CD14-positive monocyte (primary cell): ENCODE measurements at regions of chr4 and their contacts with region 1.

Region 1: DNA sequence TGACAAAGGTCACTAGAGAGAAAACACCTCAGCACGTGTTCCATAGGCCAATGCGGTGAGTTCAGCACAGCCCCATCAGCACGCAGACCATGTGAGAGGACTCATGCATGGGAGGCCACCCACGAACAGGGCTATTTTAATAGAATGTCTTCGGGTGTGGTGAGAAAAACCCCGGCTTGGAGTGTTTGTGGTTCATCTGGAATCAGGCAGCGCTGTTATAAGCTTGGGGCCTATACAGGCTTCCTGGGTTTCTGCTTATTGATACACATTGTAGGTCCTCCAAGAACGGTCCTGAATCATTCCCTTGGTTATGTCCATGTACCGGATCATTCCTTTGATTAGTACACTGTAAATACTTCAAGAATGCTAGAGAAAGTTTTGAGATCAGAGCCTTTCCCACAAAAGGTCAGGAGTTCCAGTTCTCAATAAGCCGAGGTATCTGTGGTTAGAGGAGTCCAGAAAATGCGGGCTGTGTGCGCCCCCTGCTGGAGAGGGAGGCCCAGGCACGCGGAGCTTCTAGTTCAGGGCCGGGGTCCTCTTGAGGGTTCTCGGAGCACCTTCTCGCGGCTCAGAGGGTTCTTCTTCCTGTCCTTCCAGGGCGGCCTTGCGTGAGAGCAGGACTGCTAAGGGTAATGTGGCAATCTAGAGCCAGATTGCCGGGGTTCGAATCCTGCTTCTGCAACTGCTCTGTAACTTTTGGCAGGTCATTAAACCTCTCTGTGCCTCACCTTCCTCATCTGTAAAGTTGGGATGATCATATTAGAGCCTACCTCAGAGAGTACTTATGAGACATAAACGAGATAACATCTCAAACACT is 51.8 kb downstream of the TLR10 start:
- DNase-seq: peak; percentile 62 to 75 (median 67)
- H3K4me3 ChIP-seq: no peak overlapping the region
- H3K4me3 Mint-ChIP-seq: no peak overlapping the region
- H3K27ac ChIP-seq: no peak overlapping the region
- H3K27ac Mint-ChIP-seq: no peak overlapping the region
- H3K4me1 ChIP-seq: peaks cover 14 to 29% of the 10 kb centered on the region in 2 donors
- H3K4me1 Mint-ChIP-seq: peaks cover 20% of the 10 kb centered on the region
- H3K27me3 ChIP-seq: no peaks in the 10 kb centered on the region
- H3K27me3 Mint-ChIP-seq: peaks cover 0 to 4% (median 2%) of the 10 kb centered on the region in 3 donors
- CTCF ChIP-seq: peak; percentile 99

Region 2: GRCh38 chr4:38055566-38055965 is 675.5 kb before region 1 on chr4:
- intact Hi-C with region 1: loop called in 1 of 2 experiments (anchors 5 kb)
- DNase-seq: no peak
- H3K4me3 ChIP-seq: no peak overlapping the region
- H3K4me3 Mint-ChIP-seq: no peak overlapping the region
- H3K27ac ChIP-seq: peak overlapping the region in 1 of 2 donors; percentile 0
- H3K27ac Mint-ChIP-seq: peak overlapping the region in 3 of 7 donors; percentile 33 to 50 (median 35)
- H3K4me1 ChIP-seq: no peaks in the 10 kb centered on the region
- H3K4me1 Mint-ChIP-seq: peaks cover 2% of the 10 kb centered on the region
- H3K27me3 ChIP-seq: no peaks in the 10 kb centered on the region
- H3K27me3 Mint-ChIP-seq: no peaks in the 10 kb centered on the region
- CTCF ChIP-seq: no peak

Region 3: DNA sequence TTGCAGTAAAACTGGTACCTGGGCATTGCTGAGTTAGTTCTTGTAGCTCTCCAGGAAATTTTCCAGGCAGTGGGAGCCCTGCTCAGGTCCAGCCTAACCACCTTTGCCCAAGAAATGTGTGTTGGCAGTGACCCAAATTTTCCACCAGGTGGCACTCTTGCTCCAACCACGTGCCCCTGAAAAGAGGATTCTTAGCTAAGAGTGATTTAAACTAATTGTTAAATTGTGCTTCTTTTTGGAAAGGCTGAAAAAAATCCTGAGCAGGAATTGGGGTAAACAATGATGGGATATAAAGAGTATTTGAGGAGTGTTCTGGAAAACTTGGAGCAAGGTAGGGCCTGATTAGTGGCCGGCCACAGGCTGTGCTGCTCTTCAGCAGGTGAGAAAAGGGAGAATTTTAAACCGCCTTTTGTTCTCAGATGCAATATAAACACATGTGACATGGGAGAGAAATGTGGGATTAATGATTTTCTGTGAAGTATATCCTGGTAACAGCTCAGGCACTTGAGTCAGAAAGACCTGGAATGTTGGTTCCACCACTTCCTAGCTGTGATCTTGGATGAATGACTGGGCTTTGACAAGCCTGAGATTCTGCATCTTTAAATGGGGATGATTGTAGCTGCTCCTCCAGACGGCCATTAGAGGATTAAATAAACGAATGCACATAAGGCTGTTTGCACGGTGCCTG is 551.2 kb before region 1 on chr4:
- intact Hi-C with region 1: loop called (anchors 2 to 5 kb)
- DNase-seq: peak; percentile 61 to 74 (median 65)
- H3K4me3 ChIP-seq: no peak overlapping the region
- H3K4me3 Mint-ChIP-seq: no peak overlapping the region
- H3K27ac ChIP-seq: no peak overlapping the region
- H3K27ac Mint-ChIP-seq: peak overlapping the region in 2 of 7 donors; percentile 24 to 56
- H3K4me1 ChIP-seq: peaks cover 33% of the 10 kb centered on the region in 2 donors
- H3K4me1 Mint-ChIP-seq: peaks cover 34% of the 10 kb centered on the region
- H3K27me3 ChIP-seq: no peaks in the 10 kb centered on the region
- H3K27me3 Mint-ChIP-seq: peaks cover 0 to 2% (median 2%) of the 10 kb centered on the region in 3 donors
- CTCF ChIP-seq: peak; percentile 96

Region 4: DNA sequence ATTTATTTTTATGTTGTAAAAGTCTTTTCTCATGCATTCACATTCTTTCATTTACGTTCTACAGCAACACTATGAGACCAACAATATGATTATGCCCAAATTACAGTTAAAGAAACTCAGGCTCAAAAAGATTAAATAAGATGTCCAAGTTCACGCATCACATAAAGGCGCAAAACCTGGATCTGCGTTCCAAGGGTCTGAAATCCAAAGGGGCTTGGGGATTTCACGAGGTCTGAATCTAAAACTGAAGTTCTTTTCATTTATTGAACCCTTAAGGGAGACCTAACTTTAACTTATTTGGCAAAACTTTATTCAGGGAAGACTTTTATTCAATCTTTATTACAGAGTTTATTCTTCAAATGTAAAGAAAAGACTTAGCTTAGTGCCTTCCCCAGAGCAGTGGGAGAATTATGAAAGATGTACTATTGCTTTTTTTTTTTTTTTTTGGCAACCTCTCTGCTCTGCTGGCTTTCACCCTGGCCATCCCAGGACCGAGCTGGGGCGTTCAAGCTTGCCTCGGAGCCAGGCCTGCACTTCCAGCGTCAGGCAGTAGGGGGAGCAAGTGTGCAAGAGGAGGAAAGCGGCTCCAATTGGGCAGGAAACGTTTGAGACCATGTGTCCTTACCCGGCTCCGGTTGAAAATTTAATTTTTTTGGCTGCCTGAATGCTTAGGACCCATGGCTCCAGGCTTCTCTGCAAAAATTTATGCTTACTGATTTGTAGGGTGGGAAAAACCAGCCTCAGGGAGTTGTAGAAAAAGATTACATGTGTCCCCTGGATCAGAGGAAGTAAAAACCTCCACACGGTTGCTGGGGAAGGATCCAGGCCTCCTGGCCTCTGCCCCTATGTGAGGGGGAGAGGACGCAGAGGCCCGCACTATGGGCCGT is 411.3 kb before region 1 on chr4:
- intact Hi-C with region 1: no loop called
- DNase-seq: peak; percentile 76 to 83 (median 77)
- H3K4me3 ChIP-seq: peak overlapping the region in 1 of 3 experiments; percentile 74
- H3K4me3 Mint-ChIP-seq: peak overlapping the region; percentile 68 to 84
- H3K27ac ChIP-seq: peak overlapping the region; percentile 79 to 87
- H3K27ac Mint-ChIP-seq: peak overlapping the region; percentile 87 to 95 (median 91)
- H3K4me1 ChIP-seq: peaks cover 44 to 59% of the 10 kb centered on the region in 2 donors
- H3K4me1 Mint-ChIP-seq: peaks cover 48% of the 10 kb centered on the region
- H3K27me3 ChIP-seq: no peaks in the 10 kb centered on the region
- H3K27me3 Mint-ChIP-seq: peaks cover 0 to 2% (median 0%) of the 10 kb centered on the region in 3 donors
- CTCF ChIP-seq: peak; percentile 99